GM23248 (cell line): ENCODE measurements at regions of chrX and their contacts with region 1.

Region 1: GRCh38 chrX:37905436-37906147 is 58.2 kb upstream of the DYNLT3 start:
- DNase-seq: peak; percentile 23
- H3K4me3 ChIP-seq: peak overlapping the region; percentile 32; the same call in 1 of the 2 replicates
- H3K27ac ChIP-seq: no peak overlapping the region
- H3K4me1 ChIP-seq: no peaks in the 10 kb centered on the region
- H3K27me3 ChIP-seq: no peaks in the 10 kb centered on the region; the same call in 1 of the 2 replicates

Region 2: GRCh38 chrX:37786624-37787422 is 118.8 kb before region 1 on chrX:
- in situ Hi-C with region 1: no loop called
- DNase-seq: no peak
- H3K4me3 ChIP-seq: no peak overlapping the region
- H3K27ac ChIP-seq: no peak overlapping the region
- H3K4me1 ChIP-seq: no peaks in the 10 kb centered on the region
- H3K27me3 ChIP-seq: no peaks in the 10 kb centered on the region

Region 3: GRCh38 chrX:38304010-38304409 is 398.4 kb after region 1 on chrX:
- in situ Hi-C with region 1: loop called (anchors 25 kb)
- DNase-seq: peak; percentile 21
- H3K4me3 ChIP-seq: no peak overlapping the region
- H3K27ac ChIP-seq: no peak overlapping the region
- H3K4me1 ChIP-seq: no peaks in the 10 kb centered on the region
- H3K27me3 ChIP-seq: no peaks in the 10 kb centered on the region